ENCODE measurements at regions of chr18 and their contacts with region 1.

Region 1: DNA sequence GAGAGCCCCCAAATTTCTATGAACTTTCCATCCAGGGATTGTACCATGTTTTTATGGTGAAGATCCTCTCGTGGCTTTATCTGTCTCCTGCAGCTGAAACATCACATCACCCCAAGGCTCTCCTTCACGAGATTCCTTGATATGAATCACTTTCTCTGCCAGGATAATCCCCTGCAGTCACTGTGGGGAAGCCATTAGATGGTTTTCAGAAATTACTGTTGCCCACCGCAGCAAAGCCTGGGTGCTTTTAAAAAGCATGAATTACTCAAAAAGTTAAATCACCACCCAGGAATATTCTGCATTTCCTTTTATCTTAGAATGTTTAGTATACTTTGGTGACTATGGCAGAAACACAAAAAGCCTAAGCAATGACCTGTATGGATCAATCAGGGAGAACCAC is 428.4 kb upstream of the SLC14A2 start:
- DNase-seq: no peak
- ATAC-seq: no peak
- H3K4me3 ChIP-seq: no peak overlapping the region
- H3K27ac ChIP-seq: no peak overlapping the region
- H3K4me1 ChIP-seq: no peaks in the 10 kb centered on the region
- H3K27me3 ChIP-seq: no peaks in the 10 kb centered on the region
- CTCF ChIP-seq: no peak

Region 2: GRCh38 chr18:45248240-45248903 is 61.5 kb after region 1 on chr18:
- intact Hi-C with region 1: loop called in 1 of 2 experiments (anchors 10 kb)
- DNase-seq: no peak
- ATAC-seq: peak; percentile 71 to 75 (median 72)
- H3K4me3 ChIP-seq: no peak overlapping the region
- H3K27ac ChIP-seq: peak overlapping the region; percentile 42
- H3K4me1 ChIP-seq: peaks cover 28% of the 10 kb centered on the region
- H3K27me3 ChIP-seq: no peaks in the 10 kb centered on the region
- CTCF ChIP-seq: no peak